ENCODE measurements at regions of chr3 and their contacts with region 1.

Region 1: DNA sequence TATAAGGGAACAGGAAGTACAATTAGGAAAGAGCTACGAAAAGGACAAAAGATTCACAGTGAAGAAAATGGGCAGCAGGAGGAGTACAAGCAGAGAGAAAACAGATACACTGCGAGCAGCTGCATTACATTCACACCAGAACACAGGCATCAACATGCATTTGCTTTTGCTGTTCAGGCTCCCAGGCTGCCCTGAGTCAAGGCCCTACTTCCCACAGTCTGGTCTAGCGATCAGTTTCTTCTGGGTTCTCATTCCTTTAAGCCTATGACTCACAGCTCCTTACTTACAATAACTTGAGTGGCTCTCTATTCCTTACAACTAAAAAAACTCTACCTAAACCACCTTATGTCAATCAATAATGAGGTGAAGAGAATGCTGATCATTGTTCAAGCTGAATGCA is 24.5 kb upstream of the ZNF445 start:
- DNase-seq: no peak
- ATAC-seq: no peak
- H3K4me3 ChIP-seq: no peak overlapping the region
- H3K4me3 Mint-ChIP-seq: no peak overlapping the region
- H3K27ac ChIP-seq: no peak overlapping the region
- H3K27ac Mint-ChIP-seq: no peak overlapping the region
- H3K4me1 ChIP-seq: peaks cover 0 to 2% of the 10 kb centered on the region in 2 experiments
- H3K4me1 Mint-ChIP-seq: peaks cover 11 to 23% (median 12%) of the 10 kb centered on the region in 3 donors
- H3K27me3 ChIP-seq: no peaks in the 10 kb centered on the region
- H3K27me3 Mint-ChIP-seq: no peaks in the 10 kb centered on the region

Region 2: DNA sequence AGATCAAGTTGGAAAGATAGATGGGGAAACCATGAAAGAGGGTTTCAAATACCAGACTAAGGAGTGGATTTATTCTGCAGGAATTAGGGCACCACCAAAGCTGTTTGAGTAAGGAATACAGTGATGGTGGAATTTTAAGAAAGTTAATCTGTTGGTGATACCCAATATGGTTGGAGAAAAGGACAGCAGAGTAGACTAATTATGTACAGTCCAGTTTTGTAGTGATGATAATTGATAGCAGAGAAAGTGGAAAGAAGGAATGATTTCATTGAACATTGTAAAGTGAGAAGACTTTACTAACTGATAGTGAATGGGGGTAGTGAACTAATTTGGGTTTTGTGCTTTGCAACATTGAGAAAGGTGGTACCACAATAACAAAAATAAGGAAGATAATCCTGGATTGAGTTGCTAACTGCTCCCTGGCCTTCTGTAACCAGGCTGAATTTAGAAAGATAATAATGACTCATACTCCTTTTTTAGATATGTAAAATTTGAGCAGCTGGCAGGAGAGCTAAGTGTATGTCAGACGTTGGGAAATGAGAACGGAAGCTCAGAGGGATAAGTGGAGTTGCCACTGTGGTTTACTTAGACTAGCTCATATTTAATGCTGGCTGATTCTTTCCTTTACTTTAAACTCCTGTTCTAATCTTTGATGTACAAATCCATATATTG is 146.5 kb before region 1 on chr3:
- CTCF ChIA-PET with region 1: no interaction called
- POLR2A ChIA-PET with region 1: no interaction called
- DNase-seq: no peak
- ATAC-seq: no peak
- H3K4me3 ChIP-seq: no peak overlapping the region
- H3K4me3 Mint-ChIP-seq: no peak overlapping the region
- H3K27ac ChIP-seq: no peak overlapping the region
- H3K27ac Mint-ChIP-seq: no peak overlapping the region
- H3K4me1 ChIP-seq: no peaks in the 10 kb centered on the region
- H3K4me1 Mint-ChIP-seq: peaks cover 6 to 17% (median 9%) of the 10 kb centered on the region in 3 donors
- H3K27me3 ChIP-seq: no peaks in the 10 kb centered on the region
- H3K27me3 Mint-ChIP-seq: no peaks in the 10 kb centered on the region

Region 3: GRCh38 chr3:44434834-44435510 is 67.0 kb before region 1 on chr3:
- CTCF ChIA-PET with region 1: no interaction called
- POLR2A ChIA-PET with region 1: no interaction called
- DNase-seq: no peak
- ATAC-seq: no peak
- H3K4me3 ChIP-seq: no peak overlapping the region
- H3K4me3 Mint-ChIP-seq: no peak overlapping the region
- H3K27ac ChIP-seq: no peak overlapping the region
- H3K27ac Mint-ChIP-seq: no peak overlapping the region
- H3K4me1 ChIP-seq: peaks cover 7 to 12% of the 10 kb centered on the region in 2 experiments
- H3K4me1 Mint-ChIP-seq: peaks cover 10 to 14% (median 14%) of the 10 kb centered on the region in 3 donors
- H3K27me3 ChIP-seq: no peaks in the 10 kb centered on the region
- H3K27me3 Mint-ChIP-seq: no peaks in the 10 kb centered on the region

Region 4: DNA sequence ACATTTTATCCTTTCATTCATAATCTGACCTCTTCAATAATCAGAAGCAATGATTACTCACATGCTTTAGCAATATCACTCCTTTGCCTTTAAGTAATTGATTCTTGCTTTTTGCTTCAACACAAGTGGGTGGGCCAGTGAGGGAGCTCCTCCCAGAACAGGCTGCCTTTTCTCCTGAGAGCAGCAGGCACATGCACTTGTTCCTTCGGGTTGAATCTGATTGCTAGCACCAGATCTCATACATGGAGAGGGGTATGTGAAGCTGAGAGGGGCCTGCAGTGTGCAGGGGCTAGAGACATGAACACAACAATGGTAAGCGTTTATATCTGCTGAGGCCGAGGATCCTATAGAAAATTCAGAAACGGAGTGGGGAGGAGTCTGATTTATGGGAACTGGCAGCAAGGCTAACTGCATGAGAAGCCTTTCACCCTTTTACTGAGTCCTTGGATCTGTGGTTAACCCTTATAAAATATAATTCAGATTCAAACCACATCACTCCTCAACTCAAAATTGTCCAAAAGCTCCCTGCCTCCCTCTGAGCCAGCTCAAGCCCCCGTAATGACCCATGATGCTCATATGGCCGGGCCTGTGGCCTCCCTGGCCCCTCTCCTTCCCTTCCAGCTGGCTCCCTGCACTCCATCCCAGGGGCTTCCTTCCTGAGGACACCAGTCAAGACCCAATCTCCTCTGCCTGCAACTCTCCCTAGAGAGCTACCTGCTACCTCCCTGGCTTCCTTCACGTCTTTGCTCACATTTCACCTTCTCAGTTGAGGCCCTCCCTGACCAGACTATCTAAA is 56.9 kb before region 1 on chr3:
- CTCF ChIA-PET with region 1: no interaction called
- POLR2A ChIA-PET with region 1: interaction called in 1 of 2 experiments, 10 read pairs
- DNase-seq: no peak
- ATAC-seq: no peak
- H3K4me3 ChIP-seq: no peak overlapping the region
- H3K4me3 Mint-ChIP-seq: no peak overlapping the region
- H3K27ac ChIP-seq: no peak overlapping the region
- H3K27ac Mint-ChIP-seq: peak overlapping the region in 1 of 2 donors; percentile 65
- H3K4me1 ChIP-seq: peaks cover 4 to 11% of the 10 kb centered on the region in 2 experiments
- H3K4me1 Mint-ChIP-seq: peaks cover 20 to 33% (median 31%) of the 10 kb centered on the region in 3 donors
- H3K27me3 ChIP-seq: no peaks in the 10 kb centered on the region
- H3K27me3 Mint-ChIP-seq: no peaks in the 10 kb centered on the region